ENCODE measurements at regions of chr11 and their contacts with region 1.

Region 1: GRCh38 chr11:66958232-66958955 is at the start of gene PC:
- DNase-seq: peak; percentile 91 to 99 (median 96)
- ATAC-seq: peak; percentile 96
- H3K4me3 ChIP-seq: peak within 1 kb of the TSS; percentile 57
- H3K4me3 Mint-ChIP-seq: peak within 1 kb of the TSS; percentile 91
- H3K27ac ChIP-seq: peak within 1 kb of the TSS; percentile 33 to 41
- H3K27ac Mint-ChIP-seq: peak within 1 kb of the TSS; percentile 71
- H3K4me1 ChIP-seq: peaks cover 20% of the 10 kb centered on the region
- H3K4me1 Mint-ChIP-seq: peaks cover 21% of the 10 kb centered on the region
- H3K27me3 ChIP-seq: no peaks in the 10 kb centered on the region
- H3K27me3 Mint-ChIP-seq: no peaks in the 10 kb centered on the region
- CTCF ChIP-seq: no peak
- total RNA-seq, gene PC: 5.1 to 7.1 TPM

Region 2: DNA sequence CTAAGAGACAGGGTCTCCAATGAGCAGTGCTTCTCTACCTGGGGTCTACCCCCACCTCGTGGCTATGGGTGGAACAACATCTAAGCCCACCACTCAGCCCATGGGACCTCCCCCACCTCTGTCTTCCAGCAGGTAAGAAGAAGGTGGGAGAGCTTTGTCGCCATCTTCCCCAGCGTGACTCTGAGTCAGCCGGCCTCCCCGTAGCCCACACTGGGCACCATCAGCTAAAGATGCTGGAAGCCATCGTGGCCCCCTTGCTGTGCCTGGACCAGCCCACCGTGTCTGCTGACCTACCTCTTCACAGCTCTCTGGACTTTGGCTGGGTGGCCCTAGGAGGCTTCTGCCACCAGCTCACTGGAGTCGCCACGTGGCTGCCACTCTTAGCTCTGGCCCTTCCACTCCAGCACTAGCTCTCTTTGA is 17.7 kb after region 1 on chr11:
- CTCF ChIA-PET with region 1: no interaction called
- POLR2A ChIA-PET with region 1: interaction called, 11 read pairs
- intact Hi-C with region 1: no loop called
- DNase-seq: peak in 4 of 14 experiments; percentile 5 to 41 (median 24)
- ATAC-seq: no peak
- H3K4me3 ChIP-seq: no peak overlapping the region
- H3K4me3 Mint-ChIP-seq: no peak overlapping the region
- H3K27ac ChIP-seq: no peak overlapping the region
- H3K27ac Mint-ChIP-seq: no peak overlapping the region
- H3K4me1 ChIP-seq: no peaks in the 10 kb centered on the region
- H3K4me1 Mint-ChIP-seq: no peaks in the 10 kb centered on the region
- H3K27me3 ChIP-seq: peaks cover 0 to 7% of the 10 kb centered on the region in 2 experiments
- H3K27me3 Mint-ChIP-seq: peaks cover 9% of the 10 kb centered on the region
- CTCF ChIP-seq: peak; percentile 48

Measured in CD4-positive, alpha-beta T cell (primary cell).